Sigmoid colon (tissue), 7 donors: ENCODE measurements at regions of chr11 and their contacts with region 1.

Region 1: GRCh38 chr11:57761301-57762234 is at the start of gene CTNND1:
- DNase-seq: peak; percentile 97
- H3K4me3 ChIP-seq: peak within 1 kb of the TSS; percentile 58 to 63 (median 60)
- H3K27ac ChIP-seq: peak within 1 kb of the TSS; percentile 87 to 94 (median 90)
- H3K4me1 ChIP-seq: peaks cover 0 to 29% (median 28%) of the 10 kb centered on the region in 4 donors
- H3K27me3 ChIP-seq: no peaks in the 10 kb centered on the region
- CTCF ChIP-seq: no peak
- EP300 ChIP-seq: peak in 2 of 4 donors; percentile 13 to 28
- POLR2A ChIP-seq: peak; percentile 82 to 94
- total RNA-seq, gene CTNND1: 66.0 to 102 (median 86.9) TPM

Region 2: DNA sequence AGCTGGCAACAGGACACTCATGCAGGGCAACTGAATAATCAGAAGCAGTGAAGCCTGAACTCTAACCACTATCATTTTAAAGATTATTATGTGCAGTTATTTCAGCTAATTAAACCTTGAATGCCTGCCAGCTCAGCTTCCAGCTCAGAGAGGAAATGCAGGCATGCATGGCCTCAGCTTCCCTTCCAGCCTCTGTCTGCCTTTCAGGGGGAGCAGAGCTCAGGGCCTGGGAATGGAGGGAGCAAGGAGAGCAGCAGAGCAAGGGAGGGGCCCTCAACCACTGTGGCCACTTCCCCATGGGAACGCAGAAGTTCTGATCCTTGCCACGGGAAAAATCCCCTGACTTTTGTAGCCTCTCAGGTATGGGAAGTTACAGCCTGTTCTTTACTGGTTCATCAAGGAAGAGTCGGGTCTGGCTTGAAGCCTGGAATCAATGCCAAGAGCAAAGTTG is 492.0 kb before region 1 on chr11:
- intact Hi-C with region 1: no loop called
- DNase-seq: no peak
- H3K4me3 ChIP-seq: no peak overlapping the region
- H3K27ac ChIP-seq: no peak overlapping the region
- H3K4me1 ChIP-seq: no peaks in the 10 kb centered on the region
- H3K27me3 ChIP-seq: no peaks in the 10 kb centered on the region
- CTCF ChIP-seq: no peak
- EP300 ChIP-seq: no peak
- POLR2A ChIP-seq: no peak

Region 3: GRCh38 chr11:57712256-57713150 is 49.1 kb before region 1 on chr11 and contains the start of gene TMX2:
- intact Hi-C with region 1: loop called (anchors 5 kb)
- DNase-seq: peak; percentile 97
- H3K4me3 ChIP-seq: peak within 1 kb of the TSS; percentile 96 to 98 (median 96)
- H3K27ac ChIP-seq: peak within 1 kb of the TSS; percentile 89 to 97 (median 92)
- H3K4me1 ChIP-seq: peaks cover 0 to 42% (median 36%) of the 10 kb centered on the region in 4 donors
- H3K27me3 ChIP-seq: no peaks in the 10 kb centered on the region
- CTCF ChIP-seq: no peak
- EP300 ChIP-seq: no peak
- POLR2A ChIP-seq: peak; percentile 23 to 34
- total RNA-seq, gene TMX2: 29.1 to 47.8 (median 40.7) TPM

Region 4: DNA sequence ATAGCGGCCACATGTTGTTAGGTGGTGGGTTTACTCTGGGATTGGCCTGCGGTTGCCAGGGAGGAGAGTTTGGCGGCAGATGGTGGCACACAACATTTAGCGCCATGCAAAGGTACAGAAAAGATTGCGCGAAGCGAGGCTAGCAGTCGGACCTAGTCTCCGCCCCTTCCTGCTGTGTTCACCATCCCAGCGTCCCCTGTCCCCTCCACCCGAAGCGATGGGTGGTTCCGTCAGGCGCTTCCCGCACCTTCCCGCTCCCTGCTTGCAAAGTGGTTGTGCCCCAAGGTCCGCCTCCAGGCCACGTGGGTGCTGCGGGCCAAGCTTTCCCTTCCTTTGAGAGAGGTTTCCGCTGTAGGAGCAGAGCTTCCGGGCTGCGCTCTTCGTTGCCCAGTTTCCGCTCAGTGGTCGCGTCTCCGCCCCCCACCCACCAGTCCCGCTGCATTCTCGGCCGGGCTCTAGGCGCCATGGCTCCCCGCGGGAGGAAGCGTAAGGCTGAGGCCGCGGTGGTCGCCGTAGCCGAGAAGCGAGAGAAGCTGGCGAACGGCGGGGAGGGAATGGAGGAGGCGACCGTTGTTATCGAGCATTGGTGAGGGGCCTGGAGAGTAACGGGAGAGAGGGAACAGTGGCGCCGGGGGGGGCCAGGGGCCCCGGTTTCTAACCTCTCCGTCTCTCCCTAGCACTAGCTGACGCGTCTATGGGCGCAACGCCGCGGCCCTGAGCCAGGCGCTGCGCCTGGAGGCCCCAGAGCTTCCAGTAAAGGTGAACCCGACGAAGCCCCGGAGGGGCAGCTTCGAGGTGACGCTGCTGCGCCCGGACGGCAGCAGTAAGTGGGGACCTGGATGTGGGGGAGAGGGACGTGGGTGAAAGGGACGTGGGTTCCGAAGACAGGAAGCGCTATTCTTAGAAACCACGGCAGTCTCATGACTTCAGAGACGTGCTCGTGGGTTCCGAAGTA is 20.2 kb before region 1 on chr11 and contains the start of gene SELENOH:
- intact Hi-C with region 1: loop called (anchors 2 kb)
- DNase-seq: peak; percentile 99
- H3K4me3 ChIP-seq: peak within 1 kb of the TSS; percentile 75 to 90 (median 88)
- H3K27ac ChIP-seq: peak within 1 kb of the TSS; percentile 93 to 97 (median 96)
- H3K4me1 ChIP-seq: peaks cover 0 to 21% (median 17%) of the 10 kb centered on the region in 4 donors
- H3K27me3 ChIP-seq: no peaks in the 10 kb centered on the region
- CTCF ChIP-seq: no peak
- EP300 ChIP-seq: peak in 1 of 4 donors; percentile 21
- POLR2A ChIP-seq: peak; percentile 70 to 85
- total RNA-seq, gene SELENOH: 130 to 188 (median 132) TPM

Region 5: DNA sequence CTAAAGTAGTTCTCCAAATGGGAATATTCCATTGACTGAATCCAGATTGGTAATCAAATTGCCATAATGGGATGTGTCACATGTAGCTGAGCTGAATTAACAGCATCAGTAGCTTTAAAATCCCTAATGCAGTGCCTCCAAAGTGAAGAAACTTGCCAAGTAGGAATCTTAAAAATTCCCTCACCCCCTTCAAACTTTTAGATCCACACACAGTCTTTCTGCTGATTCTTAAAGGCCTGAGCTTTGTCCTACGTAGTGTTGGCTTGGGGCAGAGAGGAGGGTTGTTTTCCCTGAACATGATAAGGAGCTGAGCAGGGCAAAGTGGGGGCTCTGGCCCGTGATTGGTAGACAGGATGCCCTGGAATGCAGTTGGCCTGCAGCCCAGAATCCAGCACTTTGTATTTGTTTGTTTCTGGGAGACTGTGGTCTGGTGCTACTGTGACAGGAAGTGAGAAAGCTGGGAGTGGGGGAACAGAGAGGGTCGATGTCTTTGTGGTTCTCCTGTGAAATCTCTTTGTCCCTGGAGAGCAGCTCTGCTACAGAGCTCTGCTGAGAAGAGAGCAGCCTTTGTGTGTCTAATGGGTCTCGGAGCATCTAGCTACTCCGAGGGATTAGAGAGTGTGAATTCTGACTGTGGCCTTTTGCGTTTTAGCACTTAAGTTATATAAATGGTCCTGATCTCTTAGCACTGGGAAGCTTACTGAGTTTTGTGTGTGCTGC is 16.9 kb after region 1 on chr11:
- intact Hi-C with region 1: loop called (anchors 2 kb)
- DNase-seq: peak; percentile 94
- H3K4me3 ChIP-seq: peak overlapping the region in 3 of 4 donors; percentile 3 to 21 (median 15)
- H3K27ac ChIP-seq: peak overlapping the region; percentile 72 to 86 (median 82)
- H3K4me1 ChIP-seq: peaks cover 0 to 99% (median 93%) of the 10 kb centered on the region in 4 donors
- H3K27me3 ChIP-seq: no peaks in the 10 kb centered on the region
- CTCF ChIP-seq: no peak
- EP300 ChIP-seq: no peak
- POLR2A ChIP-seq: no peak